ENCODE measurements at regions of chr1 and their contacts with region 1.

Region 1: DNA sequence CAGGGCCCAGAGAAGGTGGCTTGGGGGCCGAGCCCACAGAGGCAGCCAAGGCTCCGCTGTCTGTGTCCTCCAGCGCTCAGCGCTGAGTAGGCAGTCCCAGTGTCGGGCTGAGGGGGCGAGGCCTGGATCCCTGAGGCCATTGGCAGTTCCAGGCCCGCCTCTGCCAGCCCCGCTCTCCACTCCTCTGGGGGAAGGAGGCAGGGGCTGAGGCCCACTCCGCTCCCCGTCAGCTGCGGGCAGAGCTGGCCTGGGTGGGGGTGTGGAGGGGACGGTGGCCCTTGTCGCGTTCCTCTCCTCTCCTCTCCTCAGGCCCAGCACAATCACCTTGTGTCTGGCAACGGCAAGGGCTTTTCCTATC is 132.8 kb downstream of the CASZ1 start:
- DNase-seq: peak; percentile 41 to 87
- H3K4me3 ChIP-seq: peak overlapping the region in 1 of 2 donors; percentile 44
- H3K27ac ChIP-seq: peak overlapping the region; percentile 74 to 90
- H3K4me1 ChIP-seq: peaks cover 8 to 40% of the 10 kb centered on the region in 2 donors
- H3K27me3 ChIP-seq: no peaks in the 10 kb centered on the region
- CTCF ChIP-seq: no peak

Region 2: DNA sequence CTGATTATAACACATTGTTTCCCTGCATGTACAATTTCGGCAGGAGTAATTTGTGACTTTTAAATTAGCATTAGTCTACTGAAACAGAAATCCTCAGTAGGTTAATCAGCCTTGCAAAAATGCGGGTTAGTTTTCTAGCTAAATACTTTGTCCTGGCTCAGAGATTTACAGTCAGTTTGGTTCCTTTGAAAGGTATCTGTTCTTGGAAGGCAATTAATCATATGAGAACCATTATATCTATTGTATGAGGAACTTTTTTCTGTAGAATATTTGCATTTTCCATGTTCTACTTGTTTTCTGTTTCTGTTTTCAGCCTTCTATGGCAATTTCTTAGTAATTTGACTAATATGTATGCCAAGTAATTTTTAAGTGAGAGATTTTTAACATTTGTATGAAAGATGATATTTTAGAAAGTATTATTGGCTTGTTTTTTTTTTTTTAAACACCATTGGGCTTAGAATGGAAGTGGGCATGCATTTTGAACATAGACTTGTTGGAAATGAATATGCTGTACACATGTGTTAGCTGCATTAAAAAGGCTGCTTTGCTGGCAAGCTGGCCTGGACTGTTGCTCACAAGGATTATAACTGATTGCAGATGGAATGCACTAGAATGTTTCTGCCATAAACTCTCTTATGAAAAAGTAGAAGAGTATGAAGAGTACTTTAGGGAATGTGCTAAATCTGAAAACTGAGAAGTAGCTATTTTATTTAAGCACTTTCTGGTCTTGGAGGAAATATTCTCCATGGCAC is 427.1 kb before region 1 on chr1:
- intact Hi-C with region 1: no loop called
- DNase-seq: no peak
- H3K4me3 ChIP-seq: no peak overlapping the region
- H3K27ac ChIP-seq: no peak overlapping the region
- H3K4me1 ChIP-seq: no peaks in the 10 kb centered on the region
- H3K27me3 ChIP-seq: no peaks in the 10 kb centered on the region
- CTCF ChIP-seq: no peak

Region 3: GRCh38 chr1:10569531-10569930 is 94.1 kb before region 1 on chr1:
- intact Hi-C with region 1: no loop called
- DNase-seq: no peak
- H3K4me3 ChIP-seq: no peak overlapping the region
- H3K27ac ChIP-seq: no peak overlapping the region
- H3K4me1 ChIP-seq: no peaks in the 10 kb centered on the region
- H3K27me3 ChIP-seq: no peaks in the 10 kb centered on the region
- CTCF ChIP-seq: no peak

Region 4: DNA sequence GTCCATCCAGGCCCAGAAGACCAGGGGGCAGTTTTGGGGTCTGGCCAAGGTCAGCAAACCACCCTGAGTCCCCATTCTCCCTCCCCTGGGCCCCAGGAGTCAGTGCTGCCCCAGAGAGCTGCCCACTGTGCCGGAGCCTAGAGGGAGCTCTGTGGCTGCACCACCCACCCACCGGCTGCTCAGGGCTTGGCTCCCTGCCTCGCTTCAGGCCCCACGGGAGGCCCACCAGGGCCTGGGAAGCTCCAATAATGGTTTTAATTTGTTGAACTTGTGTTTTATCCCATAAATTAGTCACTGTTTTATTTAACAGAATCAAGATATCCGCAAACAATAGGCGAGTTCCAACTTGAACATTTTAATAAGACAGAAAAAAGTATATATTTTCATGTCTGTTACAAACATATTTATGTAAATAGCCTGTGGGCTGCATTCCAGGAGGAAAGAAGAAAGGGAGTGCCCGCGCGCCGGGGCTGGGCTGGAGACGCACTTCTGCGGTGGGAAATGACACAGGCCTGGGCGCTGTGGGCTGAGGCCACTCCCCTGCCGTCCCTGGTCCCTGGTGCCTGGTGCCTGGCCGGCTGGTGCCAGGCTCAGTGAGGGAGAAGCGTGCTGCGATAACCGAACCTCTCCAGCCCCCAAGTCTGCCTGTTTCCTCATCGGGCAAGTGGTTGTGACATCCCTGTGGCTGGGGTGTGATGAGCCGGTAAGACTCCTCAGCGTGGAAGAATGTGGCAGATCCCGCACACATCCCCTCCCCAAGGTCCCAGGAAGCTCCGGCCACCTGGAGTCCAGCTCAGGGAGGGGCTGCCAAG is 28.4 kb before region 1 on chr1:
- intact Hi-C with region 1: loop called (anchors 2 kb)
- DNase-seq: peak in 1 of 2 donors; percentile 83
- H3K4me3 ChIP-seq: peak overlapping the region in 1 of 2 donors; percentile 18
- H3K27ac ChIP-seq: peak overlapping the region; percentile 97 to 99
- H3K4me1 ChIP-seq: peaks cover 35 to 65% of the 10 kb centered on the region in 2 donors
- H3K27me3 ChIP-seq: no peaks in the 10 kb centered on the region
- CTCF ChIP-seq: no peak

Region 5: DNA sequence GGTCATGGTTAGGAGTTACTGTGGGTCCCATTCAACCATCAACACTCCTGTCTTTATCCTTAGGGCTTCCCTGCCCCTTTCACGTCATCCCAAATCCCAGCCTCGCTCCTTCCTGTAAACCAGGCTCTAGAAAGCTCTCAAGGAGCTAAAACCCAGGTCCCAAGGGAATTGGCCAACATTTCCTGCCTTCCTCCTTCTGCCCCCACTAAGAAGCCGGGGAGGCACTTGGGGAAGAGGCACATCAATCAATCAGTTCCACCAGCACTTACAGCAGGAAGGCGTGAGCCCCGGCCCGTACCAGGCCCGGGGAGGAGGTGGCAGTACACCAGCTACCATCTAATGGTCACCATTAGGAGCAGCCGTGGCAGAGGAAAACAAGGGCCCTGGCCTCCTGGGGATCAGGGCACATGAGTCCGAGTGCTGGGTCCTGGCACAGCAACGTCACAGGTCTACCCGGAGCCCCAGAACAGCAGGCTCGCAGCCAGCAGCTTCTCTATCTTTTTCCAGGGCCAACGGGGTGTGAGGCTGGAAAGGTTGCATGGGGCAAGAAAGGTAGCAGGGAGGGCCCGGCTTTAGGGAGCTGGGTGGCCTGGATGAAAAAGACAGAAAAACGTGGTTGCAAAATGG is 24.2 kb after region 1 on chr1:
- intact Hi-C with region 1: loop called (anchors 1 kb)
- DNase-seq: no peak
- H3K4me3 ChIP-seq: no peak overlapping the region
- H3K27ac ChIP-seq: peak overlapping the region; percentile 2 to 41
- H3K4me1 ChIP-seq: peaks cover 9 to 47% of the 10 kb centered on the region in 2 donors
- H3K27me3 ChIP-seq: no peaks in the 10 kb centered on the region
- CTCF ChIP-seq: no peak

Region 6: DNA sequence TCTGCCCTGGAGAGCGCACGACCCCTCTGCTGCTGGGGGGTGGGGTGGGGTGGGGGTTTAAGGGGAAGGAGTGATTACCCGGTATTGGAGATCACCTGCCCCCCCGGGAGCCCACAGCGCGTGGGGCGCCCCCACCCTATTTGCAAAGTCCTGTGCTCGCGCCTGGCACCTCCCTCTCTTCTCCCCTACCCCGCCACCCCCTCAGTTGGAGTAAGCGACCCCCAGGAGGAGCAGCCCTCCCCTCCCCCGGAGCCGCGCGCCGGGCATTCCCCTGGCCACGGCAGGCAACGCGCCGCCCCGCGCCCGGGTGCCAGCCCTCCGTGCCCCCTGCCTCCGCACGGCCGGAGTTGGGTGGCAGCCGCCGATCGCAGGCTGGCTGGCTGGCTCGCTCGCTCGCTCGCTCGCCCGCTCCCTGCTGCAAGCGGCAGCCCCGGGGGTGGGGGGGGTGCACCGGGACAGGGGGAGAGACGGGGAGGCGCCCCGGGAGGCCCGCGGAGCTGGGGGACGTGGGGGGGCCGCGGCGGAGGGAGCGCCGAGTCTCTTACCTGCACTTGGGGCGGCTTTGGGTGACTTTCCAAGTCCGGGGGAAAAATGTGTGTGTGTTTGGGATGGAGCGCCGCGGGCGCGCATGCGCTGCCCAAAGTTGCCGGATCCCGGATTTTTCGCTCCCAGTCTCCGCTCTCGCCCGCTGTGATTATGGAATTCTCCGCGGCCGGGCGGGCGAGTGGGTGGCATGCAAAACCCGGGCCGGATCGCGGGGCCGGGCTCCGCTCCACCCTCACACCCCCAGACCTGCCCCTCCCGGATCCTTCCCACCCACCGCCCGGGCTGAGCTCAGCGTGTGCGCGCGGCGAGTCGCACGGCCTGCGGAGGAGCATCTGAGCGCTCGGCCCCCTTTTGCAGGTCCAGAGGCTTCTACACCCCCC is 132.6 kb after region 1 on chr1 and contains the start of gene CASZ1:
- intact Hi-C with region 1: no loop called
- DNase-seq: peak in 1 of 2 donors; percentile 83
- H3K4me3 ChIP-seq: peak within 1 kb of the TSS; percentile 65 to 74
- H3K27ac ChIP-seq: peak within 1 kb of the TSS in 1 of 2 donors; percentile 46
- H3K4me1 ChIP-seq: peaks cover 6 to 28% of the 10 kb centered on the region in 2 donors
- H3K27me3 ChIP-seq: no peaks in the 10 kb centered on the region
- CTCF ChIP-seq: no peak
- total RNA-seq, gene CASZ1: 25.8 TPM